Activated CD4-positive, alpha-beta T cell treated with anti-CD3 and anti-CD28 coated beads for 36 hours (primary cell): ENCODE measurements at regions of chr10 and their contacts with region 1.

Region 1: DNA sequence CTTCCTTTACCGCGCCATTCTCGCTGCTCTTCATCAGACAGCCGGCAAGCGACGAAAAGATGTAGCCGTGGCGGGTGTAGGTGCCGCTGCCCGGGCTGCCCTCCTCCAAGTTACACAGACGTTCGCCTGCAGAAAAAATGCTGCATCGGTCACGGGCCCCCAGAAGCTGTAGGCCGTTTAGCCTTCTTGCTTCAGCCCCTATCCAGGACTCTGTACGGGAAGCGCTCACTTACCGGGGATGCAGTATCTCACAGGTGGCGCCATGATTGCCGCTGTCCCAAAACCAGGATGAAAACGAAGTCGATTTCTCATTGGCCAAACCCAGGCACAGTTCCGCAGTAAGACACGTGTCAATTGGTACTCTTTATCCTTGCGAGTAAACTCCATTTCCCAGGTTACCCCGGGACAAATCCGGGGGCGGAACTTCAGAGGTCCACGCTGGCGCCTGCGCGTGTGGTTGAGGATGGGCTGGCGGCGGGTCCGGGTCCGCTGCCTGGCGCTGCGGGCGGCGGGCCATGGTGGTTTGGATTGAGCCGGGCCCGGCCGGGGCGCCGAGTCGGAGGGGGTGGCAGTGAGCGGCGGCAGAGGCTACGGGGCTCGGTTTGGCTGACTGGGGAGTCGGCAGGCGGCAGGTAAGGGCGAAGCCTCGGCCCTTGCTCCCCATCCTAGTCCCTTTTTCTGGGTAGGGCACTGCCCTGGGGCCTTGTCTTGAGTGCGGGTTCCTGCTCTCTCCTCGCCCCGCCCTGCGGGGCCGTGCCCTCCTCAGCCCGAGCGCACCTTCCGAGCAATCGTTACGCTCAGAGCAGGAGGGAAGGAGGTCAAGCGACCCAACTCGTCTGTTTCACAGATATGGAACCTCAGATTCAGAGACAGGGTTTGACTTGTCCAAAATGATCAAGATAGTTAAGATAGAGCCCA is at the starts of genes EXOSC1 and ZDHHC16:
- DNase-seq: peak; percentile 96
- ATAC-seq: peak; percentile 91
- H3K4me3 Mint-ChIP-seq: peak within 1 kb of the TSS; percentile 86
- H3K27ac Mint-ChIP-seq: peak within 1 kb of the TSS; percentile 90
- H3K4me1 Mint-ChIP-seq: peaks cover 55% of the 10 kb centered on the region
- H3K27me3 Mint-ChIP-seq: no peaks in the 10 kb centered on the region
- total RNA-seq, gene EXOSC1: 52.3 to 54.2 TPM
- total RNA-seq, gene ZDHHC16: 34.6 to 42.8 TPM

Region 2: GRCh38 chr10:97327348-97328294 is 118.4 kb before region 1 on chr10:
- CTCF ChIA-PET with region 1: no interaction called
- POLR2A ChIA-PET with region 1: no interaction called
- intact Hi-C with region 1: no loop called
- DNase-seq: no peak
- ATAC-seq: peak; percentile 79
- H3K4me3 Mint-ChIP-seq: no peak overlapping the region
- H3K27ac Mint-ChIP-seq: peak overlapping the region; percentile 74
- H3K4me1 Mint-ChIP-seq: peaks cover 50% of the 10 kb centered on the region
- H3K27me3 Mint-ChIP-seq: no peaks in the 10 kb centered on the region

Region 3: GRCh38 chr10:97400665-97401454 is 45.1 kb before region 1 on chr10 and contains the start of gene RRP12:
- CTCF ChIA-PET with region 1: interaction called, 61 read pairs
- POLR2A ChIA-PET with region 1: interaction called, 9 read pairs
- intact Hi-C with region 1: loop called in 1 of 2 experiments (anchors 1 kb)
- DNase-seq: peak; percentile 89
- ATAC-seq: peak; percentile 99
- H3K4me3 Mint-ChIP-seq: peak within 1 kb of the TSS; percentile 96
- H3K27ac Mint-ChIP-seq: peak within 1 kb of the TSS; percentile 85
- H3K4me1 Mint-ChIP-seq: peaks cover 7% of the 10 kb centered on the region
- H3K27me3 Mint-ChIP-seq: no peaks in the 10 kb centered on the region
- total RNA-seq, gene RRP12: 45.9 to 49.4 TPM

Region 4: GRCh38 chr10:97412891-97413304 is 33.1 kb before region 1 on chr10:
- CTCF ChIA-PET with region 1: interaction called, 61 read pairs
- POLR2A ChIA-PET with region 1: interaction called, 19 read pairs
- intact Hi-C with region 1: loop called in 1 of 2 experiments (anchors 1 kb)
- DNase-seq: peak; percentile 85
- ATAC-seq: peak; percentile 72
- H3K4me3 Mint-ChIP-seq: peak overlapping the region; percentile 37
- H3K27ac Mint-ChIP-seq: peak overlapping the region; percentile 87
- H3K4me1 Mint-ChIP-seq: peaks cover 52% of the 10 kb centered on the region
- H3K27me3 Mint-ChIP-seq: no peaks in the 10 kb centered on the region

Region 5: DNA sequence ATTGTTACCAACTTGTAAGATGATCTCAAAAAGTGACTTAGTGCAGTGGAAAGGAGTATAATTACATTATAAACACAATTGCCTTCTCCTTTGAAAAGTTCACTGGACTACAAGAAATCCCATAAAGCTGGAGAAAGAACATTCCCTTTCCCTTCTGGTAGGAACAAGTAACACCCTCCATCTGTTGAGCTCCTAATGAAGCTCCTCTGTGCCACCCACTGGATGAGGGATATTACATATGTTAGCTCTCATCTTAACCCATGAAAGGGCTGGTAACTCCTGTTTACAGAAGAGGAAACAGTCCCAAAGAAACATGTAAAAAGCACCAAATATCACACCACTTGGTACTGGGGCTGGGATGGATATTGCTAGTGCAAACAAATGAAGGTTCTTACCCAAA is 11.9 kb before region 1 on chr10:
- CTCF ChIA-PET with region 1: interaction called, 15 read pairs
- POLR2A ChIA-PET with region 1: interaction called, 4 read pairs
- intact Hi-C with region 1: no loop called
- DNase-seq: no peak
- ATAC-seq: peak; percentile 45
- H3K4me3 Mint-ChIP-seq: no peak overlapping the region
- H3K27ac Mint-ChIP-seq: peak overlapping the region; percentile 56
- H3K4me1 Mint-ChIP-seq: peaks cover 16% of the 10 kb centered on the region
- H3K27me3 Mint-ChIP-seq: no peaks in the 10 kb centered on the region